ENCODE measurements at regions of chr6 and their contacts with region 1.

Region 1: DNA sequence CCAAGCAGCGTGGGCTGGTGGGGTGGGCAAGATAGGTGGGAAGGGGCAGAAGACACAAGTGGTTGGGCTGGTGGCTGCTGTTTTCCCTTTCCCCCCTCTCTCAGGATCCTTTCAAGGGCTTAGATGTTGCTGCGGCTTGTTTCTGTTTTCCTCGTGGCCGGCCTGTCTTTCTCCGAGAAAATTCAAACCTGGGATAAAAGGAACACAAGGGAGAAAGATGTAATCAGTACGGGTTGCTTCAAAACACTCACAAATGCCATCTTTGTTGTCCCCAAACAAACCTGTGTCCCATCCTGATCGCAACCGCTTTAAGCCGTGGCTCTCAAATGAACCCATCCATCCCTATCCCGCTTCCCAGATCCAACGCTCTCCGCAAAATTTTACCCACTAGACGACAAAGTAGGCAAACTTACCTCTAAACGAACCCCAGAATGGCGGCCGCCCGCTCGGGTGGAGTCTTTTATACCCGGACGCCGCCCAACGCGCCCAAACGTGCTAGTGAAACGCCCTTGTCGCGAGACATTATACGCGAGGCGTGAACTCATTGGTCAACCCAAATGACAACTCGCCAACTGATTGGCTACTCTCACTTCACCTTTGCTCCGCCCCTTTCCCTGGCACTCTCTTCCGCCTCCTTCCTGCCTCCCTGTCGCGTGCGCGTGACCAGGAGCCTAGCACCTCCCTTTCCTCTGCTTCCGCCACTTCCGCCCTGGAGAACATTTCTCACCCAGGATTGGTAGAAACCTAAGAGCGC is at the start of gene PPP1R10:
- DNase-seq: peak; percentile 86 to 100 (median 99)
- ATAC-seq: peak; percentile 89
- H3K4me3 ChIP-seq: peak within 1 kb of the TSS; percentile 90
- H3K4me3 Mint-ChIP-seq: peak within 1 kb of the TSS; percentile 88 to 100 (median 96)
- H3K27ac ChIP-seq: peak within 1 kb of the TSS; percentile 93
- H3K27ac Mint-ChIP-seq: peak within 1 kb of the TSS; percentile 98 to 100 (median 100)
- H3K4me1 ChIP-seq: peaks cover 21 to 33% of the 10 kb centered on the region in 2 donors
- H3K4me1 Mint-ChIP-seq: peaks cover 28 to 51% (median 43%) of the 10 kb centered on the region in 7 donors
- H3K27me3 ChIP-seq: no peaks in the 10 kb centered on the region
- H3K27me3 Mint-ChIP-seq: peaks cover 0 to 14% (median 0%) of the 10 kb centered on the region in 5 donors
- total RNA-seq, gene PPP1R10: 108 to 286 (median 146) TPM

Region 2: DNA sequence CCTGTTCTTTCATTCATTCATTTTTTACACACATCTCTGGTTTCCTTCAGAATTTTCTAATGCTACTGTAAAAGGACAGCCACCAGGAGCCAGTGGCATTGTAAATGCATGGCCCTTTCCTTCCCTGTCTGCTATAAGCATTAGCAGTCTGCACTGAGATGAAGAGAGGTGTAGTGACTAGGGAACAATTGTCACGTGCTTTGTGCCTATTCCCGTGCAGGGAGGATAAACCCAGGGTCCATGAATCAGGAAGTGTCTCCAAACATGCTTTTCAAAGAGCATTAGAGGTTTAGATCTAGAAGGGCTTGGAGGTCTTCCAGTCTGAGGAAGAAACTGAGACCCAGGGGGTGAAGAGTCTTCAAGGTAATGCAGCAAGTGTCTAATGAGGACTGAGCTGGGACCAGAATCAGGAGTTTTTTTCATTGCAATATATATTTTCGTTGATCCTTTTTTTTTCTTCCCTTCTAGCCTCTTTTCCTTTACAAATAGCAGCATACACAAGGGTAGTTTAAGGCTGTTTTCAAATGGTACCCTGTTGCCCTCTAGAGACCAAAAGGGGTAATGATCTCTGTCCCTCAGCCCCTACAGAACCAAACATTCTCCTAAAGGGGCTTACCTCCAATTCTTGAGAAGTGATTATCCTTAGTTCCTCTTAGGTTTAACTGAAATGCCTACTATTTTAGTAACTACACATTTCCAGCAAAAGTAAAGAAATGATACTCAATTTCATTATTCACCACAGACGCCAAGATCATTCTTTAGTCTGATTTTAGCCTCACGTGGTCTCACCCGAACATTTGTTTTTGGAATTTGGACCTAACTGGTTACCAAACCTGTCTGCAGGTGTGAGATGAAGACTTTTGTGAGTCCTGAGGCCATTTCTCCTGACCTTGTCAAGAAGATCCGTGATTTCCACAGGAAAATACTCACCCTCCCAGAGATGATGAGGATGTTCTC is 447.1 kb before region 1 on chr6:
- CTCF ChIA-PET with region 1: no interaction called
- POLR2A ChIA-PET with region 1: no interaction called
- intact Hi-C with region 1: no loop called
- DNase-seq: peak in 5 of 9 donors; percentile 23 to 44 (median 34)
- ATAC-seq: peak; percentile 81
- H3K4me3 ChIP-seq: no peak overlapping the region
- H3K4me3 Mint-ChIP-seq: no peak overlapping the region
- H3K27ac ChIP-seq: no peak overlapping the region
- H3K27ac Mint-ChIP-seq: no peak overlapping the region
- H3K4me1 ChIP-seq: peaks cover 0 to 3% of the 10 kb centered on the region in 2 donors
- H3K4me1 Mint-ChIP-seq: peaks cover 0 to 37% (median 4%) of the 10 kb centered on the region in 7 donors
- H3K27me3 ChIP-seq: peaks cover 9 to 12% of the 10 kb centered on the region in 2 donors
- H3K27me3 Mint-ChIP-seq: peaks cover 42 to 65% (median 57%) of the 10 kb centered on the region in 5 donors

Region 3: DNA sequence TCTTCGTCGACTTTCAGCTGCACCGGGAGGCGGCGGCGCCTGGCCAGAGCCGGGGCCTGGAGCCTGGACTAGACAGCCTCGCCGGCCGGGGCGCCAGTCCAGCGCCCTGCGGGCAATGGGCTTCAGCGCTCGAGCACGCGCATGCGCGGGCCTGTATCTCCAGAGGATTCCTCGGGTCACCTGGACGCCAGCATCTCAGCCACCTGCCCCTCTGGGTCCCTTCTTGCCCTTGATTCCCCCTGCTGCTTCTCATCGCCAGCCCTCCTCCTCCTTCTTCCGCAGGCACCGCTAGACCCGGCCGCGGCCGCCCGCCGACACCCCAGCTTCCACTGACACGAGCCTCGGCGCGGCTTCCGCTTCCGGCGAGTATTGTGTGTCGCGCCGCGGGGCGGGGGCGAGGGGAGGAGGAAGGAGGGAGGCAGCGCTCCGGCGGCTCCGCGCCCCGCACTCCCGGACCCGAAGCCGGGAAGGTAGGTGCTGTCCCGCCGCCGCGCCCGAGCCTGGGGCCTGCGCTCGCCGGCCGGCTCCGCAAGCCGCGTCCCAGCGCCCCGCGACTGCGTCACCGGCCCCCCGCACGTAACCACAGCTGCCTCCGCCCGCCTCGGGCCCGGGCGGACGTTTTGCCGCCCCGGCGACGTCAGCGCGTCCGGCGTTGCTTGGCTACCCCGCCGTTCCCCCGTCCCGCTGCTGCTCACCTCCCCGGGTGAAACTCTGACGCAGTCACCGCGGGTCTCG is 290.3 kb before region 1 on chr6 and contains the start of gene TRIM39:
- CTCF ChIA-PET with region 1: no interaction called
- POLR2A ChIA-PET with region 1: interaction called, 5 read pairs
- intact Hi-C with region 1: loop called (anchors 5 kb)
- DNase-seq: peak; percentile 88 to 94 (median 92)
- ATAC-seq: peak; percentile 76
- H3K4me3 ChIP-seq: peak within 1 kb of the TSS; percentile 70
- H3K4me3 Mint-ChIP-seq: peak within 1 kb of the TSS; percentile 93 to 99 (median 97)
- H3K27ac ChIP-seq: peak within 1 kb of the TSS; percentile 100
- H3K27ac Mint-ChIP-seq: peak within 1 kb of the TSS; percentile 92 to 100 (median 99)
- H3K4me1 ChIP-seq: peaks cover 34 to 48% of the 10 kb centered on the region in 2 donors
- H3K4me1 Mint-ChIP-seq: peaks cover 42 to 70% (median 63%) of the 10 kb centered on the region in 7 donors
- H3K27me3 ChIP-seq: no peaks in the 10 kb centered on the region
- H3K27me3 Mint-ChIP-seq: no peaks in the 10 kb centered on the region
- total RNA-seq, gene TRIM39: 12.8 to 42.1 (median 26.4) TPM

Region 4: DNA sequence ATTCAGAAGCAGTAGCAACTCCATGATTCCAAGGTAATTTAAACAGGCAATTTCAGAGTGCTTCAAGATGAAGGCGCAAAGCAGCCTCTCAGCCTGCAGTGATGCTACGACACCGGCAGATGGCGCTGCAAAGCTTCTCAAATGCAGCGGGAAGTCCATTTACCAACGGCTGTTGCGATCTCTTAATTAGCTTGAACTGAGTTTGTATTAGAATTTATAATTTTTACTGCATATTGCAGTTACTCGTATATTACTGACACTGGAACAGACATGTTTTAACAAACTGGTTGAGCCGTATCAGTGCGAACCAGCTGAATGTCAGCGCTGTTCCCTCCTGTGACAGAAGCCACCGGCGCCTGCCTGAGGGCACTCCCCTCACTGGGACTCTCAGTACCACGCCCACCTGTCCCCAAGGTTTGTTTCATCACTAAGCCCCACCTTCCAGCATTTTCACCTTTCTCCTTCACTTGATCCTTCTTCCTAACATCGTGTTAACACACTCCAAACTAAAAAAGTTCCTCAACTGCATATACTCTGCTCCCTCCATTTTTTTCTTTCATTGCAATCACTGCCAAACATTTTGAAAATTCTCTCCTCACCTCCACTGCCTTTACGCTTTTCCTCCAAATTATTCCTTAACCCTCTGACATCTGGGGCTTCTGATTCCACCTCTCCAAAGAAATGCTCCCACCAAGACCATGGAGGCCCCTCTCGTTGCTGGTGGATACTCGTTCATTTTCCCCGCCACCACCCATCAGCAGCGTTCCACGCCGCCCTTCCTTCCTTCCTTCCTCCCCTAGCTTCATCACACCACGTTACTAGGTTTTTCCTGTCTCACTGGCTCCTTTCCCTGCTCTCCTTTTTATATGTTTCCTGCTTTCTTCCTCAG is 75.2 kb before region 1 on chr6:
- CTCF ChIA-PET with region 1: interaction called, 15 read pairs
- POLR2A ChIA-PET with region 1: interaction called, 97 read pairs
- intact Hi-C with region 1: loop called in 1 of 2 experiments (anchors 1 kb)
- DNase-seq: peak; percentile 60 to 84 (median 81)
- ATAC-seq: peak; percentile 84
- H3K4me3 ChIP-seq: peak overlapping the region; percentile 64
- H3K4me3 Mint-ChIP-seq: peak overlapping the region; percentile 83 to 92 (median 86)
- H3K27ac ChIP-seq: peak overlapping the region; percentile 67
- H3K27ac Mint-ChIP-seq: peak overlapping the region; percentile 82 to 96 (median 93)
- H3K4me1 ChIP-seq: peaks cover 26 to 29% of the 10 kb centered on the region in 2 donors
- H3K4me1 Mint-ChIP-seq: peaks cover 29 to 38% (median 35%) of the 10 kb centered on the region in 7 donors
- H3K27me3 ChIP-seq: no peaks in the 10 kb centered on the region
- H3K27me3 Mint-ChIP-seq: peaks cover 0 to 3% (median 0%) of the 10 kb centered on the region in 5 donors

Region 5: DNA sequence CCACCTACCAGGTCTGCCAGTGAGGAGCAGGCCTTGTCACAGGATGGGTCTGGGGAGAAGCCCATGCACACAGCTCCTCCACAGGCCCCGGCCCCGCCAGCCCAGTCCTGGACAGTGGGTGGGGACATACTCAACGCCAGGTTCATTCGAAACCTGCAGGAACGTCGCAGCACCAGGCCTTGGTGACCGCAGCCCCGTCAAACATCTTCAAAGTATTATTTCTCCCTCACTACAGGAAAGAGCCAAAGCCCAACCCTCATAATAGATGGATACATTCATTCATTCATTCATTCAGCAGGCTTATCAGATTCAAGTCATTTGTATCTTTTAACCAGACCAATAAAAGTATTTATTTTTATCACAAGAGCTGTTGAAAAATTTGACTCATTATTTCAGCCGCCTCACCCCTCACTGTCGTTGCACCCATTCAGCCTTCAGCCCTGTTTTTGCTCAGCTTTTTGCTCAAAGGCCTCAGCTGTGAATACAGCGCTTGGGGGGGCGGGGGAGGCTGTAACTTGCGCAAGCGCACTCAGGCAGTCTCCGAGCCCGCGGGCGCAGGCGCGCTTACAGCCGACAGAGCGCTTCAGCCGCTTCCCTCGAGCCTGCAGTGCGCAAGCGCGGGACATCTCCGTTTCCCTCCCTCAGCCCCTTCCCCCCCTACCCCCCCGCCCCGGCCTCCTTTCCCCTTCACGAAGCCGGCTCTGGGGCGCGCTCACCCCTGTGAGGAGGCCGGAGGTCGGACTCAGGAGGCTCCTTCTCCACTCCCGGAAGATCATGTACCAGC is 29.7 kb after region 1 on chr6 and contains the start of gene C6orf136:
- CTCF ChIA-PET with region 1: no interaction called
- POLR2A ChIA-PET with region 1: interaction called, 22 read pairs
- intact Hi-C with region 1: loop called (anchors 1 kb)
- DNase-seq: peak in 8 of 9 donors; percentile 77 to 94 (median 92)
- ATAC-seq: peak; percentile 90
- H3K4me3 ChIP-seq: peak within 1 kb of the TSS; percentile 93
- H3K4me3 Mint-ChIP-seq: peak within 1 kb of the TSS; percentile 82 to 93 (median 88)
- H3K27ac ChIP-seq: peak within 1 kb of the TSS; percentile 91
- H3K27ac Mint-ChIP-seq: peak within 1 kb of the TSS; percentile 79 to 93 (median 91)
- H3K4me1 ChIP-seq: peaks cover 11 to 17% of the 10 kb centered on the region in 2 donors
- H3K4me1 Mint-ChIP-seq: peaks cover 24 to 38% (median 32%) of the 10 kb centered on the region in 7 donors
- H3K27me3 ChIP-seq: no peaks in the 10 kb centered on the region
- H3K27me3 Mint-ChIP-seq: no peaks in the 10 kb centered on the region
- total RNA-seq, gene C6orf136: 23.7 to 38.0 (median 32.1) TPM

Region 6: DNA sequence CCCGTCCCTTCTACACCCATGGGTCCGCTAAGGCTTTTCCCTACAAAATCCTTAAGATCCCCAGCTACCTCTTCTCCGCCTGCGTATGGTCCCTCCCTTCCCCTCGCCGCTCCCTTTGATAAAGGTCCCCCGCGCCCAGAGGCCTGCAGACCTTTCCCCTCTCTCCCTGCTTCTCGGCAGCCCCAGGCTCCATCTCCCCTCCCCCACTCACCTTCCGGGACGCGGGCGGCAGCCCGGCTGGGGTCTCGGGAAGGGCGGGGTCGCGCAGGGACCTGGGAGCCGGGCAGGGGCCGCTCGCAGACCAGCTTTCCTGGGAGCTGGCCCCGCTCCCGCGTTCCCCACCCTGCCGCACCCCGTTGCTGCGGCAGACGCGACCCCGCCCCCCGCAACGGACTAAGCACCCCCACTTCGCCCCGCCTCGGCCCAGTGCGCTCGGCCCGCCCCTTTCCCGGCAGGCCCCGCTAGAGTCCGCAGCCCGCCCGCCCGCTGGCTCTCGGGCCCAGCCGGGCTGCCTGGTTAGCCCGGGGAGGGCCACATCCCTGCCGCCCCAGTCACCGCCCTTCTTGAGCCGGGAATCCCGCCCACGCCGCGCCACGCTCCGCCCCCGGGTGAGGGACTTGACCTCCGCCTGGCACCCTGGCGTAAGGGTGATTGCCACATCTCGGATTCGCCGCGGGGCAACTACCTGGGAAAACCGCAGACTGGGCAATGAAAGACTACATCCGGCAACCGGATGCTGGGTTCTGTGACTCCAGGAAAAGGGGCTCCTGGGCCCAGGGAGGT is 125.5 kb after region 1 on chr6 and contains the start of gene FLOT1:
- CTCF ChIA-PET with region 1: no interaction called
- POLR2A ChIA-PET with region 1: interaction called, 9 read pairs
- intact Hi-C with region 1: loop called in 1 of 2 experiments (anchors 5 kb)
- DNase-seq: peak in 7 of 9 donors; percentile 47 to 98 (median 56)
- ATAC-seq: peak; percentile 84
- H3K4me3 ChIP-seq: peak within 1 kb of the TSS; percentile 85
- H3K4me3 Mint-ChIP-seq: peak within 1 kb of the TSS; percentile 84 to 100 (median 93)
- H3K27ac ChIP-seq: peak within 1 kb of the TSS; percentile 83
- H3K27ac Mint-ChIP-seq: peak within 1 kb of the TSS; percentile 84 to 98 (median 93)
- H3K4me1 ChIP-seq: peaks cover 28 to 35% of the 10 kb centered on the region in 2 donors
- H3K4me1 Mint-ChIP-seq: peaks cover 48 to 74% (median 61%) of the 10 kb centered on the region in 7 donors
- H3K27me3 ChIP-seq: no peaks in the 10 kb centered on the region
- H3K27me3 Mint-ChIP-seq: no peaks in the 10 kb centered on the region
- total RNA-seq, gene FLOT1: 59.4 to 204 (median 81.3) TPM

Region 7: DNA sequence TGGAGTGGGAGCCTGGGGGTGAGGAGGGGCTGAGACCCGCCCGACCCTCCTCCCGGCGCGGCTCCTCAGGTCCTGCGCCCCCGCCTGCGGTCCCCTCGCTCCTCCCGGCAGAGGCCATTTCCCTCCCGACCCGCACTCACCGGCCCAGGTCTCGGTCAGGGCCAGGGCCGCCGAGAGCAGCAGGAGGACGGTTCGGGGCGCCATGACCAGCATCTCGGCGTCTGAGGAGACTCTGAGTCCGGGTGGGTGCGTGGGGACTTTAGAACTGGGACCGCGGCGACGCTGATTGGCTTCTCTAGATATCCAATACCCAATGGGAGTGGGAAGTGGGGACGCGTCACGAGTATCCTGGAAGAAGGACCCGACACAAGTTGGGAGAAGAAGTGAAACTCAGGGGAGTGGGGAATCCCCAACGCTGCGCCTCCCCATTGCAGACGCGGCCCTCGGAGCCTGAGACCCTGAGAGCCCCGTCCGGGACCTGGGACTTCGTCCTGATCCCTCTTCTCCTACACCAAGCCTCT is 740.0 kb after region 1 on chr6 and contains the start of gene HLA-B:
- CTCF ChIA-PET with region 1: no interaction called
- POLR2A ChIA-PET with region 1: no interaction called
- intact Hi-C with region 1: loop called (anchors 1 to 5 kb)
- DNase-seq: peak; percentile 65 to 91 (median 82)
- ATAC-seq: peak; percentile 90
- H3K4me3 ChIP-seq: peak within 1 kb of the TSS; percentile 68
- H3K4me3 Mint-ChIP-seq: peak within 1 kb of the TSS; percentile 80 to 100 (median 98)
- H3K27ac ChIP-seq: peak within 1 kb of the TSS; percentile 100
- H3K27ac Mint-ChIP-seq: peak within 1 kb of the TSS; percentile 99 to 100 (median 100)
- H3K4me1 ChIP-seq: peaks cover 28 to 33% of the 10 kb centered on the region in 2 donors
- H3K4me1 Mint-ChIP-seq: peaks cover 49 to 66% (median 58%) of the 10 kb centered on the region in 7 donors
- H3K27me3 ChIP-seq: no peaks in the 10 kb centered on the region
- H3K27me3 Mint-ChIP-seq: peaks cover 0 to 19% (median 0%) of the 10 kb centered on the region in 5 donors
- total RNA-seq, gene HLA-B: 5,136 to 7,364 (median 5,516) TPM

Measured in naive thymus-derived CD4-positive, alpha-beta T cell (primary cell).